Activated CD4-positive, alpha-beta memory T cell treated with anti-CD3 and anti-CD28 coated beads for 36 hours (primary cell): ENCODE measurements at regions of chr14 and their contacts with region 1.

Region 1: GRCh38 chr14:49461529-49462401 is 124.4 kb downstream of the RPS29 start:
- DNase-seq: peak; percentile 46
- H3K4me3 Mint-ChIP-seq: no peak overlapping the region
- H3K27ac Mint-ChIP-seq: no peak overlapping the region
- H3K4me1 Mint-ChIP-seq: no peaks in the 10 kb centered on the region
- H3K27me3 Mint-ChIP-seq: no peaks in the 10 kb centered on the region

Region 2: DNA sequence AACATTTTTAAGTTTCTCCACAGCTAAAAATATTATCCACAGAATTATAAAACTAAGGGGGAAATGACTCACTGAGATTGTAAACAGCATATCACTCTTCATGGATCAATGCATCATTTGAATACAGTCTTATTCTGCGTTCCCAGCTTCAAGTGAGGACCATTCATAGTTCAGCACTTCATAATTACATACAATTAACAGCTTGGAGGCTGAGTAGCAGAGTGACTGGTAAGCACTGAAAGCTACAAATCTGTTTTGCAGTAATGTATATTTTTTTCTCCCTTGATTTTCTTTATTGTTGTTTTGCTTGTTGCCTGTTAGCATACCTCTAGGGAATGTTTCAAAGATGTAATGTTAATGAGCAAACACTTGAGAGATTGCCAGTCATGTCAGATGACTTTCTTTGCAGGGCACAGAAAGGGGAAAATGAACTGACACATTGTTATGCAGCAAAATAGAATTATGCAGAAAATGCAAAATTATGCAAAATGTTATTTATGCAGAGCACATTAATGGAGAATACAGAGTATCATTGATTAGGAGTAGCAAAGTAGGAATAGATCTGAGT is 14.1 kb before region 1 on chr14:
- CTCF ChIA-PET with region 1: interaction called, 22 read pairs
- POLR2A ChIA-PET with region 1: no interaction called
- intact Hi-C with region 1: no loop called
- DNase-seq: no peak
- H3K4me3 Mint-ChIP-seq: no peak overlapping the region
- H3K27ac Mint-ChIP-seq: no peak overlapping the region
- H3K4me1 Mint-ChIP-seq: no peaks in the 10 kb centered on the region
- H3K27me3 Mint-ChIP-seq: peaks cover 3% of the 10 kb centered on the region

Region 3: DNA sequence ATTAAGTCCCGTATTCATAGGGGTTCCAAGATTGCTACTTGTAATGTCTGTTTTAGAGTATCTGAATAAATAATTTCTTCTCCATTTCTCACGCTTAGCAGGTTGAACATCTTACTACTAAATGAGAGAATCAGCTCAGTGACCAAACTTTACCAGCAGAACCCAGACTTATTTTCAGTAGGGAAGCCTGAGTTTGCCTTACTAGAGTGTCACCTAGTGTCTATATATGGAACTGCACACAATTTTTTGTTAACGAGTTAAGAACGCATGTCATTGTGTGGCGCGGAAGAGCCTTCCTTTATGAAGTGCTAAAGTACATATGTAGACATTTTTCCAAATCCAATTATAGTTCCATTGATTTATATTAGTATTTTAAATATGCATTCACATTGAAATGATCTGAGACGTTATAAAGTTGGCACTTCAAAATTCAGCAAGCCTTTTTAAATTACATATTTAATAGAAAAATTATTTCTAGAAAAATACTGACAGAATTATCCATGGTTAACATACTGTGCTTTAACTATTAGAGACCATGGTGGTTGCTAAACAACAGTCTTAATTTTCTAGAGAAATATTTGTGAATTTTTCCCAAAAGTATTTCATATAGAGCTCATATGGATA is 36.1 kb after region 1 on chr14:
- CTCF ChIA-PET with region 1: interaction called, 178 read pairs
- POLR2A ChIA-PET with region 1: interaction called, 6 read pairs
- intact Hi-C with region 1: loop called (anchors 1 kb)
- DNase-seq: no peak
- H3K4me3 Mint-ChIP-seq: no peak overlapping the region
- H3K27ac Mint-ChIP-seq: no peak overlapping the region
- H3K4me1 Mint-ChIP-seq: no peaks in the 10 kb centered on the region
- H3K27me3 Mint-ChIP-seq: peaks cover 14% of the 10 kb centered on the region

Region 4: DNA sequence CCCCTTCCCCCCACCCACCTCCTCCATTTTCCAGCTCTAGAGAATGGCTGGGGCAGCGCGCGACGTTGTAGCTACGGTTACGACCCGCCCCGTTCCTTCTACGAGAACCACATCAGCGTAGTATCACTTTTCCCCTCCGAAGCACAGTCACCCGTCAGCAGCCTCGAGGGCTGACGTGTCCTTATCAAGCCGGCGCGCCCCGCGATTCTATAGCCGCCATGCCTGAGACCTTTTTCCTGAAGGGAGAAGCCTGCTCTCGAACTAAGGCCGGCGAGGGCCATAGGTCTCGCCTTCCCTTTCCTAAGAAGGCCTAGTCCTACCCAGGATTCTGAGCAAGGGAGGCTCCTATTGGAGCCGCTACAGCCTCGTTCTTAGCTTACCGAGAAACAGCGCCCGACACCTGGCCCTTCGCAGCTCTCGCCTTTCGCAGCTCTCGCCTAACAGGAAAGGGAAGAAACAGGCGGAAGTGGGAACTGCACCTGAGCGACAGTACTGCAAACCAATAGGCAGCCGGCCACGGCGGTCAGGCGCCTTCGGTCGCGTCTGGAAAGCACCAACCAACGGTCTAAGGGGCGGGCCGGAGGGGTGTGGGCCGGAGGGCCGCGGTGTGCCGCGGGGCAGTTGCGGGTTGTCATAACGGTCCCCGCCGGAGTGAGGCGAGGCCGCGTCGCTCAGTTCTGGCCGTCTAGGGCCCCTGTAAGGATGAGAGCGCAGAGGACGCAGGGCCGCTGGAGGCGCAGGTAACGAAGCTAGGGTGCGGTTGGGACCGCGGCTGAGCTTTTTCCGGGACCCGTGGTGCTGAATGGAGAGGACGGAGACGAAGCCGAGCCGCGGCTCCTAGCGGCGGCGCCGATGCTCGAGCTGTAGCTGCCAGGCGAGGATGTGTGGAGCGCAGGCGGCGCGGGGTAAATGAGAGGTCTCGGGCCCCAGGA is 158.7 kb after region 1 on chr14 and contains the starts of genes MGAT2 and RPL36AL:
- CTCF ChIA-PET with region 1: interaction called, 6 read pairs
- POLR2A ChIA-PET with region 1: no interaction called
- intact Hi-C with region 1: loop called (anchors 5 kb)
- DNase-seq: peak; percentile 98
- H3K4me3 Mint-ChIP-seq: peak within 1 kb of the TSS; percentile 96
- H3K27ac Mint-ChIP-seq: peak within 1 kb of the TSS; percentile 96
- H3K4me1 Mint-ChIP-seq: peaks cover 39% of the 10 kb centered on the region
- H3K27me3 Mint-ChIP-seq: no peaks in the 10 kb centered on the region
- total RNA-seq, gene MGAT2: 40.4 to 43.7 TPM
- total RNA-seq, gene RPL36AL: 314 to 320 TPM

Region 5: DNA sequence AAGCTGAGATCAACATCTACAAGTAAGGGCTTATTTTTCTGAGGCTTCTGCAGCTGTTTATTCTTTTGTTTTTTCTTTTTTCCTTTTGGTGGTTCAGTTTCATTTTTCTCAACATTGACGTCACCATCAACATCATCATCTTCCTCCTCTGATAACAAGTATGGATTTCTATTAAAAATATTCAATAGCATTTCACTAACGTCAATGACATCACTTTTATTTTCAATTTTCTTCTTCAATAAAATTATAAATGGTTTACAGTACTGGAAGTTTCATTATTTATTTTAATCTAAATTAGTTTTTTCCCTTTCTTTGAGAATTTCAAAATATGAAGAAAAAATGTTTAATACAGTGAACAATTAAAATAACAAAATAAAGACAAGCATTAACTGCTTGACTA is 366.9 kb after region 1 on chr14:
- CTCF ChIA-PET with region 1: interaction called, 10 read pairs
- POLR2A ChIA-PET with region 1: no interaction called
- intact Hi-C with region 1: loop called (anchors 5 kb)
- DNase-seq: no peak
- H3K4me3 Mint-ChIP-seq: no peak overlapping the region
- H3K27ac Mint-ChIP-seq: no peak overlapping the region
- H3K4me1 Mint-ChIP-seq: peaks cover 2% of the 10 kb centered on the region
- H3K27me3 Mint-ChIP-seq: no peaks in the 10 kb centered on the region